Dendritic cell treated with granulocyte-macrophage colony-stimulating factor and Interleukin-4, amounts not matched to agents 40 ng/mL and 50 ng/mL, for 4 days (primary cell): ENCODE measurements at regions of chr15 and their contacts with region 1.

Region 1: GRCh38 chr15:66386204-66387123 is at the start of gene MAP2K1:
- H3K4me3 Mint-ChIP-seq: peak within 1 kb of the TSS; percentile 95
- H3K27ac Mint-ChIP-seq: peak within 1 kb of the TSS; percentile 92
- H3K4me1 Mint-ChIP-seq: peaks cover 57% of the 10 kb centered on the region
- H3K27me3 Mint-ChIP-seq: no peaks in the 10 kb centered on the region

Region 2: DNA sequence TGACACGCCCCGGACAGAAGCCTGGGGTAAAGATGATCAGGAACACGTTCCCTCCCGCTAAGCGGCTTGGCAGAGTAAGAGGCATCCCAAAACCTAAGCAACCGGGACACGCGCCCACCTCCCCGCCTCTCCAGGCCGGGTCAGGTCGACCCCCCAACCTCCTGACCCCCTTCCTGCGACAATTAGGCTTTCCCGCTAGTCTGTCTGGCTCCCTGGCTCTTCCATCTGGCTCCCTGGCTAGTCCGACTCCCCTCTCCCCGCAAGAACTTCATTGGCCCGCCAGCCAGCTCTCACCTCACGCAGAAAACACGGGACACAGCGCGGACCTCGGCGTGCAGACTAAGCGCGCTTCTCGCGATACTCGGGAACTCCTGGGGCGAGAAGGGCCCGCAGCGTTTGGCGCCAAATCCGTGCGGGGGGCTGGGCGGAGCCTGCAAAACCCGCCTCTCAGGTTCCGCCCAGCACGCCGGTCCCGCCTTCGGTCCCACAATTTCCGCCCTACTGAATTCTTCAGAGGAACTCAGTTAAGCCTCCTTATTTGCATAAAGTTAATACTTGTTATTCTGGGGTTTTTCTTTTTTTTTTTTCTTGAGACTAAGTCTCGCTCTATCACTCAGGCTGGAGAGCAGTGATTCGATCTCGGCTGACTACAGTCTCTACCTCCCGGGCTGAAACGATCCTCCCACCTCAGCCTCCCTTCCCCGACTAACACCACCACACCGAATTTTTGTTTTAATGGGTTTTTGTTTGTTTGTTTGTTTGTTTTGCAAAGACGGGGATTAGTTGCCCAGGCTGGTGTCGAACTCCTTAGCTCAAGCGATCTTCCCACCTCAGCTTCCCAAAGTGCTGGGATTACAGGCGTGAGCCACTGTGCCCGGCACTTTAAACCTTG is 29.9 kb before region 1 on chr15 and contains the start of gene TIPIN:
- intact Hi-C with region 1: loop called (anchors 1 kb)
- H3K4me3 Mint-ChIP-seq: peak within 1 kb of the TSS; percentile 93
- H3K27ac Mint-ChIP-seq: peak within 1 kb of the TSS; percentile 92
- H3K4me1 Mint-ChIP-seq: peaks cover 27% of the 10 kb centered on the region
- H3K27me3 Mint-ChIP-seq: no peaks in the 10 kb centered on the region

Region 3: GRCh38 chr15:66429117-66429516 is 42.7 kb after region 1 on chr15:
- intact Hi-C with region 1: loop called (anchors 5 kb)
- H3K4me3 Mint-ChIP-seq: peak overlapping the region; percentile 6
- H3K27ac Mint-ChIP-seq: peak overlapping the region; percentile 77
- H3K4me1 Mint-ChIP-seq: peaks cover 83% of the 10 kb centered on the region
- H3K27me3 Mint-ChIP-seq: no peaks in the 10 kb centered on the region

Region 4: DNA sequence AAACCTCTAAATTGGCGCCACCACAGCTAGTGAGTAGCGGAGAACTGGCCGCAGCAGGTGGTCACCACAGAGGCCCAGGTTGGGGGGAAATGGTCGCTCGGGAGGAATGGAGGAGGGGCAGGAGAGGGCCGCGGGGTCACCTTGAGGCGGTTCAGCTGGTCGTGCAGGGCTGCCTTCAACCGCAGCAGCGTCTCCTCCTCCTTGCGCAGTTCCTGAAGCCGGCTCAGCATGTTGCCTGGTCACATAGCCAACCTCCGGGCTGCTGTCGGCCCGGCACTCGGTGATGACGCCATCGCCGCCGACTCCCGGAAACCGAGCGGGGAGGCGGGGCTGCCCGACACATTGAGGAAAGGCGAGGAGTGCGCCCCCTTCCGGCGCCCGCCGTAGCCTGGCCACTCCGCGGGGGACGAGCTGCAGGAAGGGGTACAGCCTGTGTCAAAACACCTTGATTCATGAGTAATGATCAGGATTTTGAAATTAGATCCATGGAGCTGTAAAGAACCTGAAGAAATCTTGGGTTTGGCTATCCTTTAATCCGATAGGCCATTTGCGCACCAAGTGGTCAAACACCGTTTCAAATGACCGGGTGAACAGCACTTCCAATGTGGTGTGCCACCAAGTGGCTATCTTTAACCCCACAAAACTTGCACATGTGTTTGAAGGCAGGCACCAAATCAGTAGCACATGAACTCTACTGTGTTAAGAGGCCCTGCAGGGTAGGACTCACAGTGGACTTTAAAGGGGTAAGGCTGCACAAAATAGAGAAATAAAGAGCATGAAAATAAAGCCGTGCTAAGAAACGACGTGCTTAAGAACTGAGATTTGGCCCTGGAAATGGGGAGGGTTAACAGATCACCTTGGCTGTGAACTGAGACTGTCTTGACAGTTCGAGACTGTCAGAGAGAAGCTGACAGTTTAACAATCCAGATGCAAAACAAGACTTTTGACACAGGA is 111.3 kb after region 1 on chr15 and contains the start of gene SNAPC5:
- intact Hi-C with region 1: loop called (anchors 2 kb)
- H3K4me3 Mint-ChIP-seq: peak within 1 kb of the TSS; percentile 90
- H3K27ac Mint-ChIP-seq: peak within 1 kb of the TSS; percentile 98
- H3K4me1 Mint-ChIP-seq: peaks cover 52% of the 10 kb centered on the region
- H3K27me3 Mint-ChIP-seq: no peaks in the 10 kb centered on the region

Region 5: DNA sequence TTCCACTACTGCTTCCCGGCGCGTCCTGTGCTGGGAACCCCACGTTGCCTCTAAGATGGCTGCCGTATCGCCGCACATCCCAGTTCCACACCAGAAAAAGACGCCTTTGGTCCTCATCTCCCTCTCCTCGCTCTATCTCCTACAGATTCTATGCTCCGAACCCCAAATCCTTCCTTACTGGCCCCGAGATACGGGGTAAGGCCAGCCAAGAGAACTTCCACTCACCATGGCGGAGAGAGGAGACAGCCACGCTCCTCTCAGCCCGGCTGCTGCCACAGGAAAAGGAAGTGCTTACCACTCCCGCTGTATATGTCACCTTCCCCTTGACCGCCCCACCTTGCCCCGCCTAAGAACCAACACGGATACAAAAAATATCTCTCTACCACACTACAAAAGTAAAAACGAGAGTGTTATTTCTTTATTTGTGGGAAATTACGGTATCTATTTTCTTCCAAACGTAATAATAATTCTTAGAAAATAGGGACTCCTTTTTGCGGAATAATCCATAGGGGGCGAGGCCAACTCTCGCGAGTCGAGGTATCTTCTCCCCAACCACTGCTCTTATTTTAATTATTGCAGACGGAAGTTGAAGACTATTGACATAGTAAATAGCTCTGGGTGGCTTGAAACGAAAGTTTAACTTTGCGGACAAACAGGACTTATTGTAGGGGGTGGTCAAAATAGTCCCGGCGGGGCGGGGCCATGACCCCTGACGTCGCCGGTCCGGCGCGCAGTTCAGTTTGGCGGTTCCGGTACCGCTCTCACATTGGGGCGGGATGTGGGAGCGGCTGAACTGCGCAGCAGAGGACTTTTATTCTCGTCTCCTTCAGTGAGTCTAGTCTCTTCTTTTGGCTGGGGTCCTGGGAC is 118.3 kb after region 1 on chr15 and contains the starts of genes RPL4 and ZWILCH:
- intact Hi-C with region 1: loop called (anchors 2 kb)
- H3K4me3 Mint-ChIP-seq: peak within 1 kb of the TSS; percentile 98
- H3K27ac Mint-ChIP-seq: peak within 1 kb of the TSS; percentile 94
- H3K4me1 Mint-ChIP-seq: peaks cover 47% of the 10 kb centered on the region
- H3K27me3 Mint-ChIP-seq: no peaks in the 10 kb centered on the region